HepG2 (cell line): ENCODE measurements at regions of chrX and their contacts with region 1.

Region 1: GRCh38 chrX:130575831-130576389 is 174.1 kb downstream of the RBMX2 start:
- DNase-seq: peak; percentile 14
- ATAC-seq: peak; percentile 52; the same call in 1 of the 3 replicates
- H3K4me3 ChIP-seq: no peak overlapping the region
- H3K27ac ChIP-seq: no peak overlapping the region
- H3K4me1 ChIP-seq: no peaks in the 10 kb centered on the region
- H3K27me3 ChIP-seq: no peaks in the 10 kb centered on the region
- CTCF ChIP-seq: peak; percentile 69
- EP300 ChIP-seq: no peak
- POLR2A ChIP-seq: no peak
- RAD21 ChIP-seq: peak; percentile 43; the same call in 1 of the 2 replicates

Region 2: DNA sequence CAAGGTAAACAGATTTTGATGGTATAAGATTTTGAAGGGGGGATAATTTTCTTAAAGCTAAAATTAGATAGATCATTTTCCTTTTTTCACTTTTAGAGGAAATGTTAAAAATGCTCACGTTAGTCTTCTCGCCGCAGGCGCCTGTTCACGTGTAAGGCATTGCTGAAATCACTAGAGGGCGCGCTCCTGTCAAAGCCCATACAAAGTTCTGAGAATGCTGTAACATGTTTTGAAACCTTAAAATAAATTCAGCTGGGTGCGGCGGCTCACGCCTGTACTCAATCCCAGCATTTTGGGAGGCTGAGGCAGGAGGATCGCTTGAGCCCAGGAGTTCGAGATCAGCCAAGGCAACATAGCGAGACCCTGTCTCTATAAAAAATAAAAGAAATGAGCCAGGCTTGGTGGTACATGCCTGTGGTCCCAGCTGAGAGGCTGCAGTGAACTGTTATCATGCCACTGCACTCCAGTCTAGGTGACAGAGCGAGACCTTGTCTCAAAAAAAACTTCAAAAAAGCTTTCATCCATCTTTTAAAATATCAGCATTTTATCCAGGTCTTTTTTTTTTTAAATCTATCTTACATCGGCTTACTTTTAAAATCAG is 36.1 kb before region 1 on chrX:
- CTCF ChIA-PET with region 1: no interaction called
- POLR2A ChIA-PET with region 1: no interaction called
- in situ Hi-C with region 1: no loop called
- intact Hi-C with region 1: loop called (anchors 2 kb)
- DNase-seq: peak; percentile 15
- ATAC-seq: peak; percentile 51
- H3K4me3 ChIP-seq: no peak overlapping the region
- H3K27ac ChIP-seq: no peak overlapping the region
- H3K4me1 ChIP-seq: no peaks in the 10 kb centered on the region
- H3K27me3 ChIP-seq: no peaks in the 10 kb centered on the region
- CTCF ChIP-seq: peak; percentile 65
- EP300 ChIP-seq: no peak
- POLR2A ChIP-seq: no peak
- RAD21 ChIP-seq: 0 out of 2 replicates have a peak, but pooled peaks have one; percentile 29

Region 3: GRCh38 chrX:130801901-130802300 is 226.0 kb after region 1 on chrX:
- CTCF ChIA-PET with region 1: interaction called, 4 read pairs
- POLR2A ChIA-PET with region 1: no interaction called
- in situ Hi-C with region 1: no loop called
- intact Hi-C with region 1: loop called (anchors 5 kb)
- DNase-seq: peak; percentile 13
- ATAC-seq: peak; percentile 68
- H3K4me3 ChIP-seq: no peak overlapping the region
- H3K27ac ChIP-seq: no peak overlapping the region
- H3K4me1 ChIP-seq: no peaks in the 10 kb centered on the region; the same call in 1 of the 2 replicates
- H3K27me3 ChIP-seq: no peaks in the 10 kb centered on the region
- CTCF ChIP-seq: peak; percentile 39
- EP300 ChIP-seq: no peak
- POLR2A ChIP-seq: no peak
- RAD21 ChIP-seq: no peak